Endothelial cell of umbilical vein (primary cell): ENCODE measurements at regions of chr11 and their contacts with region 1.

Region 1: DNA sequence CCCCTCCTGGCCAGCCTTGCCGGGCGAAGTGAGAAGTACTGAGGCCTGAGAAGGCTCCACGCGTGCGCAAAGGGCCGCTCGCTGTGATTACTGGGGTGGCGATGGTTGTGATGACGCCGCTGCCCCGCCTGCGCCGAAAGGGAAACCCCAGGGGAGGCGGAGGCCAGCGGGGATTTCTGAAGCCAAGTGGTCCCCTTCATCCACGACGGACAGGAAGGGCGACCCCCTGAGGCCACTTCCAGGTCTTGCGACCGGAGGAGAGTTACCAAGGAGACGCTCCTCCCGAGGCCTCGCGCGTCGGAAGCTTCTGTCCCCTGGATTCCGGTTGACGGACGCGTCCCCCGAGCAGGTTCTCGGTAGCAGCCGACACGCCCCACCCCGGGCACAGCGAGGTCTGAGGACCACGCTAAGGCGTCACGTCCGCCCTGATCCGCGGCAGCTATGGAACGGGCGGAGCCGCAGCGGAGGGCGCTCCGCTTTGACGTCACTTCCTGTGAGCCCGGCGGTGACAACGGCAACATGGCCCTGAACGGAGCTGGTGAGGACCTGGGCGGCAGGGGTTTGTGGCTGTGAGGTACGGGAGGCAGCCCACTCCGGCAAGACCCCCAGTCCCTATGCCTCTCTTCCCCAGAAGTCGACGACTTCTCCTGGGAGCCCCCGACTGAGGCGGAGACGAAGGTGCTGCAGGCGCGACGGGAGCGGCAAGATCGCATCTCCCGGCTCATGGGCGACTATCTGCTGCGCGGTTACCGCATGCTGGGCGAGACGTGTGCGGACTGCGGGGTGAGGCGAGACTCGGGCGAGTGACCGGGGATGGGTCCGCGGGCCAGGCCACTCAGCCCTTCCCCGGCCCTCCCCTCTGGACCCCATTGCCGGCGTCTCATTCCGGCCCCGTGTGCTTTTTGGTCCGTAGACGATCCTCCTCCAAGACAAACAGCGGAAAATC is at the start of gene ZNRD2:
- DNase-seq: peak; percentile 99
- H3K4me3 ChIP-seq: peak within 1 kb of the TSS; percentile 55 to 66 (median 63)
- H3K27ac ChIP-seq: peak within 1 kb of the TSS; percentile 61
- H3K4me1 ChIP-seq: peaks cover 51% of the 10 kb centered on the region
- H3K27me3 ChIP-seq: no peaks in the 10 kb centered on the region
- CTCF ChIP-seq: peak; percentile 29 to 47
- POLR2A ChIP-seq: peak; percentile 84
- total RNA-seq, gene ZNRD2: 40.8 and 46.9 TPM in 2 replicates

Region 2: GRCh38 chr11:65382033-65382807 is 188.0 kb before region 1 on chr11 and contains the start of gene SLC25A45:
- CTCF ChIA-PET with region 1: no interaction called
- POLR2A ChIA-PET with region 1: no interaction called
- dilution Hi-C with region 1: no loop called
- intact Hi-C with region 1: loop called (anchors 5 kb)
- DNase-seq: peak; percentile 99
- H3K4me3 ChIP-seq: peak within 1 kb of the TSS in 1 of 3 experiments; percentile 20
- H3K27ac ChIP-seq: peak within 1 kb of the TSS; percentile 95
- H3K4me1 ChIP-seq: peaks cover 41% of the 10 kb centered on the region
- H3K27me3 ChIP-seq: no peaks in the 10 kb centered on the region
- CTCF ChIP-seq: peak; percentile 89 to 90
- POLR2A ChIP-seq: peak; percentile 84
- total RNA-seq, gene SLC25A45: 3.1 and 4.8 TPM in 2 replicates

Region 3: GRCh38 chr11:65540297-65541092 is 29.8 kb before region 1 on chr11:
- CTCF ChIA-PET with region 1: interaction called, 146 read pairs
- POLR2A ChIA-PET with region 1: no interaction called
- dilution Hi-C with region 1: no loop called
- intact Hi-C with region 1: loop called (anchors 1 kb)
- DNase-seq: peak; percentile 90
- H3K4me3 ChIP-seq: peak overlapping the region in 1 of 3 experiments; percentile 38
- H3K27ac ChIP-seq: no peak overlapping the region
- H3K4me1 ChIP-seq: peaks cover 6% of the 10 kb centered on the region
- H3K27me3 ChIP-seq: no peaks in the 10 kb centered on the region
- CTCF ChIP-seq: peak; percentile 85 to 91
- POLR2A ChIP-seq: no peak

Region 4: DNA sequence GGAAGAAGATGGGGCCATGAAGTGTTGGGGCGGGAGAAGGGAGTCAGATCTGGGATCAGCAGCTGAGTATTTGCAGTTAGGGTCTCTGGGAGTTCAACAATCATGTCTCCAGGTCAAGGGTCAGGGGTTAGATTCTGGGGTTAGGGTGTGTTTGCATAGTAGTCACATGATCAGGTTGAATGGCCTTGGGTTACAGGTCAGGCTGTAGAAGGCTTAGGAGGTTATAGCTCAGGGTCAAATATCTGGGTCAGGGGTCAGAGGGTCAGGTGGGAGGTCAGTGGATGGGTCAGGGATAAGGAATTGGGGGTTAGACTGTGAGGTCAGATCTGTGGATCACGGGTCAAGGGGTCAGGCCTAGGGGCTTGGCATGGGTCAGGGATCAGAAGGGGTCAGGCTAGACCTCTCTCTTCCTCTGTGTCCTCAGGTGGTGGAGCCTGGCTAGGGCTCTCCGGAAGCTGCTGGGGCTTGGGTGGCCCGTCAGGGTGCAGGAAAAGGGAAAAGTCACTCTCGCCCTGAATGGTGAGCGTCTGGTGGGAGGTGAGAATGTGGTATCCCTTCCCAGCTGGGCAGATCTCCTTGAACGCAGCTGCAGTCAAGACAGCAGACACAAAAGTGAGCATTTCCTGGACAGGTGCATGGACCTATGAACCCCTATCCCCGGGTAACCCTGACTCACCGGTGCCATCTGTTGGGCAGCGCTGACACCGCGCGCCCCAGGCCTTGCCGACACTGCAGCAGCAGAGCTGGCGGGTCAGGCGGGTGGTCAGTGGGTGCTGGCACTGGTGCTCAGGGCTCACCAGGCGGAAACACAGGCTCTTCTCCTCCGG is 18.5 kb before region 1 on chr11:
- CTCF ChIA-PET with region 1: interaction called, 10 read pairs
- POLR2A ChIA-PET with region 1: no interaction called
- dilution Hi-C with region 1: no loop called
- intact Hi-C with region 1: loop called (anchors 2 kb)
- DNase-seq: peak; percentile 44
- H3K4me3 ChIP-seq: no peak overlapping the region
- H3K27ac ChIP-seq: no peak overlapping the region
- H3K4me1 ChIP-seq: peaks cover 20% of the 10 kb centered on the region
- H3K27me3 ChIP-seq: no peaks in the 10 kb centered on the region
- CTCF ChIP-seq: peak; percentile 55 to 57
- POLR2A ChIP-seq: no peak

Region 5: DNA sequence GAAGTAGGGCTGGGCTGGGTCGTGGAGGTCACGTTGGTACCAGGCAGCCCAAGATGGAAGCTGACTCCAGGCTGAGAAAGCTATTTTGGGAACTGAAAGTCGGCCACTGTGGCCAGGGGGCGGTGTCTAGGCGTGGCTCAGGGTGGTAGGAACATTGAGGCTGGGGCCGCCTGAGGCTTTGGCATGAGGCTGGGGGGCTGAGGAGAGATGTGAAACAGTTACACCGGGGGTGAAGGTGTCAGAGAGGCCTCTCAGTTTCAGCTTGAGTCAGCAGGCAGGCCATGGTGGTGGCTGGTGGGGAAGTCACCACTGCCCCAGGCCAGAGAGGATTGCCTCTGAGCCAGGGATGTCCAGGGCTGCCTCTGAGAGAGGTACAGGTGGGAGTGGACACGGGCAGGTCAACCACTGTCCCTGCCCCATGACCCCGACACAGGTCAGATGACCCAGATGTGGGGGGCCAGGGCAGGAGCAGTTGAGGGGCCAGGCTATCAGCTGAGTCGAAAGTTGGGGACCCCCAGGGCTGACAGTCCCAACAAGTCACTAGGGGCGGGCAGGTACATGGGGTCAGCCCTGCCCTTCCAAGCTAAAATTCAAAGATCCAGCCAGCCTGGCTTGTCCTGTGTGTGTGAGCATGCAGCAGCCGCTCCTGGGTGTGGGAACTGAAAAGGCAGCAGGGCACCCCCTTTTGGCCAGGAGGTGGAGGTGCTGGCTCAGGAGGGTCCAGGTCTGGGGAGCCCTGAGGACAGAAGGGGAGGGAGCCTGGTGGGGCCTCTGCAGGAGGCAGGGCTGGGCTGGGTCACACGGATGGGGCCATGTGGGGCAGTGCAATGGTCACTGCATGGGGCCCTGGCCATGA is 18.2 kb after region 1 on chr11:
- CTCF ChIA-PET with region 1: interaction called, 167 read pairs
- POLR2A ChIA-PET with region 1: interaction called, 7 read pairs
- dilution Hi-C with region 1: no loop called
- intact Hi-C with region 1: loop called (anchors 1 kb)
- DNase-seq: peak; percentile 54
- H3K4me3 ChIP-seq: no peak overlapping the region
- H3K27ac ChIP-seq: no peak overlapping the region
- H3K4me1 ChIP-seq: peaks cover 7% of the 10 kb centered on the region
- H3K27me3 ChIP-seq: no peaks in the 10 kb centered on the region
- CTCF ChIP-seq: peak; percentile 63 to 73
- POLR2A ChIP-seq: no peak

Region 6: DNA sequence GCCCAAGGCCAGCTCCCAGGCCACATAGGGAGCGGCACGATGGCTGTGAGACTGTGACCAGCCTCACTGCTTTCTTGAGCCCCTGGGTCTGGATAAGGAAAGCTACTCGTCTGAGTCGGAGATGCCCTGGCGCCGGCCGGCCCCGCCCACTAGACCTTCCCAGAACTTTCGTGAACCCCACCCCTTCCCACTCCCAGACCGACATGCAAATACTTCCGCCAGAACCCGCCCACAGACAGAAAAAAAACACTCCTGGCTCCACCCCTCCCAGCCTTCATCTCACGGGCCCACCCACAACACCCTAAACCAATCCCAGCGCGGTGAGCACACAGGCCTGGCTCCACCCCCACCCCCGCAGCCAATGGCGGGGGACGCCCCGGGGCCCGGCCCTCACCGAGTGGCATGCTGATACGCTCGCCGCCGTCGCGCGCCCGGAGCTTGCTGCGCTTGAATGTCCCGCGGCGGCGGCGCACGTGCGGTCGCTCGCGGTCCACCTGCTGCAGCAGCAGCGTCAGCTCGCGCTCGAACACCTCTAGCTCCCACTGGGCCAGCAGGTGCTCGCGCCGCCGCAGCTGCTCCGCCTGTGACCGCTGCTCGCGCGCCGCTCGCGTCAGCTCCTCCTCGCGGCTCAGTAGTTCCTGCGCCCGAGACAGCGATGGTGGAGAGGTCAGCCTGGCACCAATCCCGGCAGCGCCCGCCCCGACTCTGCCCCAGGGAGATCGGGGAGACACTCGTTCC is 36.8 kb after region 1 on chr11:
- CTCF ChIA-PET with region 1: interaction called, 4 read pairs
- POLR2A ChIA-PET with region 1: no interaction called
- dilution Hi-C with region 1: no loop called
- intact Hi-C with region 1: loop called (anchors 1 kb)
- DNase-seq: peak; percentile 96
- H3K4me3 ChIP-seq: no peak overlapping the region
- H3K27ac ChIP-seq: no peak overlapping the region
- H3K4me1 ChIP-seq: peaks cover 41% of the 10 kb centered on the region
- H3K27me3 ChIP-seq: no peaks in the 10 kb centered on the region
- CTCF ChIP-seq: no peak
- POLR2A ChIP-seq: peak; percentile 68

Region 7: GRCh38 chr11:65652511-65653231 is 82.4 kb after region 1 on chr11:
- CTCF ChIA-PET with region 1: no interaction called
- POLR2A ChIA-PET with region 1: no interaction called
- dilution Hi-C with region 1: no loop called
- intact Hi-C with region 1: loop called (anchors 2 kb)
- DNase-seq: peak; percentile 96
- H3K4me3 ChIP-seq: peak overlapping the region in 2 of 3 experiments; percentile 25 to 49
- H3K27ac ChIP-seq: peak overlapping the region; percentile 95
- H3K4me1 ChIP-seq: peaks cover 23% of the 10 kb centered on the region
- H3K27me3 ChIP-seq: no peaks in the 10 kb centered on the region
- CTCF ChIP-seq: no peak
- POLR2A ChIP-seq: peak; percentile 76